ENCODE measurements at regions of chr1 and their contacts with region 1.

Region 1: GRCh38 chr1:201149400-201149799 is 4.9 kb downstream of the TMEM9 start:
- DNase-seq: peak; percentile 82
- H3K27ac ChIP-seq: no peak overlapping the region
- CTCF ChIP-seq: no peak; the same call in 1 of the 2 replicates

Region 2: GRCh38 chr1:201137579-201138310 is 11.7 kb before region 1 on chr1:
- CTCF ChIA-PET with region 1: interaction called, 24 read pairs
- POLR2A ChIA-PET with region 1: interaction called, 3 read pairs
- DNase-seq: peak; percentile 59
- H3K27ac ChIP-seq: peak overlapping the region; percentile 69
- CTCF ChIP-seq: no peak

Region 3: GRCh38 chr1:201184307-201185122 is 35.1 kb after region 1 on chr1:
- CTCF ChIA-PET with region 1: interaction called, 11 read pairs
- POLR2A ChIA-PET with region 1: no interaction called
- DNase-seq: peak; percentile 80
- H3K27ac ChIP-seq: no peak overlapping the region
- CTCF ChIP-seq: 0 out of 2 replicates have a peak, but pooled peaks have one; percentile 34

Region 4: GRCh38 chr1:201219481-201220359 is 70.3 kb after region 1 on chr1:
- CTCF ChIA-PET with region 1: interaction called, 30 read pairs
- POLR2A ChIA-PET with region 1: interaction called, 4 read pairs
- DNase-seq: no peak
- H3K27ac ChIP-seq: no peak overlapping the region
- CTCF ChIP-seq: no peak

Measured in RWPE1 (cell line).